ENCODE measurements at regions of chr17 and their contacts with region 1.

Region 1: DNA sequence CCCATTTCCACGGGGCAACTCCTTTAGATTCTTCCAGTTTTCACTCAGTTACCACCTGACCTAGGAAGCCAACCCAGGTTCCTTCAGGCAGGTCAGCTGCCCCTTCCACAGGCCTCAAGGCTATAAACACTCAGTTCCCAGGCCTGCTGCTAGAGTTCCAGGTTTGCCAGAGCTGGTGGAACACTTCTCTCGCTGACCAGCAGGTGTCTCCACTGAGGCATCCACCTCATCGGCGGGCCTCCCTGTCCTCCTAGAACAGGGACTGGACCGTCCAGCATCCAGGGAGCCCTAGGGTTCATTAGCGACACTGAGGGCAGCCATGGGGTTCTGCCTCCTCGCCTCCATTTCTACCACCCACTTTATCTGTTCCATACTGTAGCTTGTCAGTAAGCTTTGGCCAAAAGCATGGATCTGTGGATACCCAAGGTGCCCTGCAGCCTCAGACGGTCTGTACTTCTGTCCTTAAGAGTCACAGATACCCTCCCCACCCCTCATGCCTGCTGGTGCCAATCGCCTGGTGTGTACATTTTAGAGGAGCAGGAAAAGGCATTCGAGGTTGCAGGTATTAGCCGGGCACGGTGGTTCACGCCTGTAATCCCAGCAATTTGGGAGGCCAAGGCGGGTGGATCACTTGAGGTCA is 29.0 kb downstream of the PIMREG start:
- DNase-seq: peak; percentile 51 to 87
- H3K4me3 ChIP-seq: no peak overlapping the region
- H3K27ac ChIP-seq: no peak overlapping the region
- H3K4me1 ChIP-seq: peaks cover 32% of the 10 kb centered on the region
- H3K27me3 ChIP-seq: no peaks in the 10 kb centered on the region
- CTCF ChIP-seq: peak; percentile 99

Region 2: GRCh38 chr17:6443692-6444569 is 29.3 kb before region 1 on chr17 and contains the start of gene PIMREG:
- CTCF ChIA-PET with region 1: no interaction called
- POLR2A ChIA-PET with region 1: interaction called, 5 read pairs
- intact Hi-C with region 1: loop called (anchors 1 kb)
- DNase-seq: peak; percentile 85 to 98
- H3K4me3 ChIP-seq: peak within 1 kb of the TSS; percentile 90
- H3K27ac ChIP-seq: peak within 1 kb of the TSS; percentile 54
- H3K4me1 ChIP-seq: peaks cover 5% of the 10 kb centered on the region; the same call in 1 of the 2 replicates
- H3K27me3 ChIP-seq: 0 out of 2 replicates have a peak, but pooled peaks cover 6% of the 10 kb centered on the region
- CTCF ChIP-seq: no peak
- total RNA-seq, gene PIMREG: 52.2 and 62.3 TPM in 2 replicates

Region 3: DNA sequence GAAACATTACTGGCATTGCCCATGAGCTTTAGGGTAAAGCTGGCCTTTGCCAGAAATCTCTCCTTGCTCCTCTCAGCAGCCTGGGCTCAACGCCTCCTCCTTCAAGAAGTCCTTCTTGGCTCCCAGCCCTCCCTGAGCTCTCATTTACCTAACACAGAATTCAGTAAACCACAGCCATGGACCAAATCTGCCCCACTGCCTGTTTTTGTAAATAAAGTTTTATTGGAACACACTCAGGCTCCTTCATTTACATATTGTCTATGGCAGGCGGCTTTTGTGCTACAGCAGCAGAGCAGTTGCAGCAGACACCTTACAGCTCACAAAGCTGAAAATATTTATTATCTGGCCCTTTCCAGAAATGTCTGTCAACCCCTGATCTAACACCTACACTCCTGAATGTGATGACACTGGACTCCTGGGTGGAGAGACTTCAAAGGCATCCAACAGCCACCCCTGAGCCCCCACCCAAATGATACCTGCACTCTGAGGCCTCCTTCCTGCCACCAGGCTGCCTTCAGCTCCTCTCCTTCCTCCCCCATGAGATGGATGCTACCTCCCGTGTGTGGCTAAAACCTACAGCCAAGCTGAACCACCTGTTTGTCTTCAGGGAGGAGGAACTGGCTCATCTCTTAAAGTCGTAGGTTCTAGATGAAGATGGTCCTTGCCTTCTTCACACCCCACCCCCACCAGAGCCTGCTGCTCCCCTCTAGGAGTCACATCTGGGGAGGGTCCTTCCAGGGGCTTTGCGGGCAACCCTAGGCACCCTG is 12.6 kb after region 1 on chr17:
- CTCF ChIA-PET with region 1: no interaction called
- POLR2A ChIA-PET with region 1: no interaction called
- intact Hi-C with region 1: no loop called
- DNase-seq: no peak
- H3K4me3 ChIP-seq: no peak overlapping the region
- H3K27ac ChIP-seq: no peak overlapping the region
- H3K4me1 ChIP-seq: no peaks in the 10 kb centered on the region
- H3K27me3 ChIP-seq: no peaks in the 10 kb centered on the region
- CTCF ChIP-seq: no peak

Region 4: DNA sequence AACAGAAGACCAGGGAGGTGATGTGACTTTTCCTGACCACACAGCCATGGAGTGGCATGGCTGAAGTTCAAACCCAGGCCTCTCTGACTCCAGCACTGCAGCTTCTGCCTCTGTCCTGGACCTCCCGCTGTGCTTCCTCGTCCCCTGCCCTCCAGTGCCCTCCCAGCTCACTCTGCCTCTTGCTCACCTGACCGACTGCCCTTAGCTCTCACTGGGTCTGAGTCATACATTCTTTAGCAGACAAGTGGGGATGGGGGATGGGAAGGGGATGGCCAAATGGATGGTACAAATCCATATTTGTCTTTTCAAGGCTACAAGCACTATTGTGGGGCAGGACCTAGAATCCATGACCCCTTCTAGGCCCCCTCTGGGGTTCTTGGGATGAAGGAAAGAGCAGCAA is 50.1 kb after region 1 on chr17:
- CTCF ChIA-PET with region 1: interaction called, 4 read pairs
- POLR2A ChIA-PET with region 1: no interaction called
- intact Hi-C with region 1: loop called (anchors 5 kb)
- DNase-seq: peak; percentile 85 to 91
- H3K4me3 ChIP-seq: no peak overlapping the region
- H3K27ac ChIP-seq: peak overlapping the region; percentile 74
- H3K4me1 ChIP-seq: peaks cover 41% of the 10 kb centered on the region
- H3K27me3 ChIP-seq: no peaks in the 10 kb centered on the region
- CTCF ChIP-seq: no peak

Region 5: DNA sequence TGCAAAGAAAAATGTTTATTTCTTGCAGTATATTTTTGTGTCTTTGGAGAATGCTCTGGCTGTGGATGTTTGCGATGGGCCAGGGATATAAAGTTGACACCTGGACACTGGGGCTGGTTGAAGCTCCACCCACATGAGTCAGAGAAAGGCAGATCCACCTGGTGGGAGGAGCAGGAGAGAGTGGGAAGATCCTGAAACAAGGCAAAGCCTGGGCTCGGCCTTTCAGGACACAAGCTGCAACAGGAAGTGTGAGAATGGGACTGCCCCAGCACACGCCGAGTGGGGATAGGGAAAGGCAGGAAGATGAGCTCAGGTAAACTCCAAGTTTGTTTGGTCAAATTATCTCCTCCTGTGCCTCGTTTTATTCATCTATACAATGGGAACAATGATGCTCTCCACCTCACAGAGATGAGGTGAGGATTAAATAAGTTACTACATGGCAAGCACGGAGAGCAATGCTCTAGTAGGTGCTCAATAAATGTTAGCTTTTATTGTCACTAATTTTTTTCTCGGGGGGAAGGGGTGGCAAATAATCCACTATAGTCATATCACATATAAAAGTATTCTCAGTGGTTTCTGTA is 104.5 kb after region 1 on chr17:
- CTCF ChIA-PET with region 1: interaction called, 8 read pairs
- POLR2A ChIA-PET with region 1: no interaction called
- intact Hi-C with region 1: loop called (anchors 2 kb)
- DNase-seq: peak in 1 of 2 experiments; percentile 65
- H3K4me3 ChIP-seq: no peak overlapping the region
- H3K27ac ChIP-seq: no peak overlapping the region
- H3K4me1 ChIP-seq: no peaks in the 10 kb centered on the region
- H3K27me3 ChIP-seq: no peaks in the 10 kb centered on the region
- CTCF ChIP-seq: no peak

Region 6: GRCh38 chr17:6640536-6641373 is 167.5 kb after region 1 on chr17 and contains the starts of genes KIAA0753 and TXNDC17:
- CTCF ChIA-PET with region 1: no interaction called
- POLR2A ChIA-PET with region 1: interaction called, 3 read pairs
- intact Hi-C with region 1: loop called (anchors 2 kb)
- DNase-seq: peak; percentile 74 to 94
- H3K4me3 ChIP-seq: peak within 1 kb of the TSS; percentile 81
- H3K27ac ChIP-seq: peak within 1 kb of the TSS; percentile 71
- H3K4me1 ChIP-seq: peaks cover 31% of the 10 kb centered on the region
- H3K27me3 ChIP-seq: no peaks in the 10 kb centered on the region
- CTCF ChIP-seq: no peak
- total RNA-seq, gene KIAA0753: 34.1 and 47.0 TPM in 2 replicates
- total RNA-seq, gene TXNDC17: 103 and 114 TPM in 2 replicates